Caco-2 (cell line): ENCODE measurements at regions of chrX and their contacts with region 1.

Region 1: GRCh38 chrX:69222103-69223090 is 57.1 kb upstream of the PJA1 start:
- DNase-seq: peak; percentile 48 to 70
- H3K4me3 ChIP-seq: no peak overlapping the region
- H3K4me3 Mint-ChIP-seq: no peak overlapping the region
- H3K27ac Mint-ChIP-seq: no peak overlapping the region
- H3K4me1 ChIP-seq: no peaks in the 10 kb centered on the region
- H3K4me1 Mint-ChIP-seq: no peaks in the 10 kb centered on the region
- H3K27me3 ChIP-seq: no peaks in the 10 kb centered on the region
- H3K27me3 Mint-ChIP-seq: peaks cover 2% of the 10 kb centered on the region
- CTCF ChIP-seq: peak; percentile 70 to 78

Region 2: DNA sequence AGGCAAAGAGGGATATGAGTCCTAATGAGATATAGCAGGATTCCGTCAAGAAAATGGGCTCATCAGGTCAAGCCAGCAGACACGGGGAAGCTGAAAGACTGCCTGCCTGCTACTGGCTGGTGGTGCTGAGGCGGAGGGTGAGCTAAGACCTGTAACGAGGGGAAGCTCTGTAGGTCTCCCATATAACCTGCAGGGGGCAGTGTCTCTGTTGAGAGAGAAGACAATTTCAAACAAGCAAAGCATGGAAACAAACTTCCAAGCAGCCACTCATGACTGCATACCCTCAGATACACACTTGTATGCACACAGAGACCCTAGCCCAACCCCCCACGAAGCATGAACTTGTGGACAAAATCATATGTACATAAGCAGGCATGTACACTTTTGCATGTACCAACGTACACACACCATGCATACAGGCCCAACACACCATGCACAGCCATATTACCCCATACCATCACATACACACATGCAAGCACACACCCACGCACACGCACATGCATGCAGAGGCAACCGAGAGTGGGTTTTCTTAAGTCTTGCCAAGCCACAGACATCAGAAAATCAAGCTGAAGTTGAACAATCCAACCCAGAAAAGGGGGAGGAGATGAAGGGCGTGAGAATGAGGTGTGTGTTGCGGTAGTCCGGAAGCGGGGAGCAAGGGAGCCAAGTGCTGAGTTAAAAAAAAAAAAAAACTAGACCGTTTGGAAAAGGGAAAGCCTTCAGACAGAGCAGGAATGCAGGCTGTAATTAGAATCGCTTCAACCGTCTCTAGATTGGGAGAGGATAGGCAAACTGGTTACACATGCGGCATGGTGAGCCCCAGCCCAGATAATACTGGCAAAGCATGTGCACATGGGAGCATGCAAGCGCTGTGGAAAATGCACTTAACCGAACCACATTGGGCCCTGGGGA is 128.2 kb before region 1 on chrX:
- CTCF ChIA-PET with region 1: no interaction called
- POLR2A ChIA-PET with region 1: no interaction called
- intact Hi-C with region 1: loop called (anchors 1 kb)
- DNase-seq: peak; percentile 54 to 56
- H3K4me3 ChIP-seq: no peak overlapping the region
- H3K4me3 Mint-ChIP-seq: no peak overlapping the region
- H3K27ac Mint-ChIP-seq: no peak overlapping the region
- H3K4me1 ChIP-seq: no peaks in the 10 kb centered on the region
- H3K4me1 Mint-ChIP-seq: no peaks in the 10 kb centered on the region
- H3K27me3 ChIP-seq: no peaks in the 10 kb centered on the region
- H3K27me3 Mint-ChIP-seq: no peaks in the 10 kb centered on the region
- CTCF ChIP-seq: peak; percentile 28 to 30

Region 3: GRCh38 chrX:69285881-69286564 is 63.6 kb after region 1 on chrX:
- CTCF ChIA-PET with region 1: no interaction called
- POLR2A ChIA-PET with region 1: no interaction called
- intact Hi-C with region 1: loop called (anchors 5 kb)
- DNase-seq: peak; percentile 37 to 62
- H3K4me3 ChIP-seq: peak overlapping the region; percentile 8; the same call in 1 of the 2 replicates
- H3K4me3 Mint-ChIP-seq: peak overlapping the region; percentile 51
- H3K27ac Mint-ChIP-seq: no peak overlapping the region
- H3K4me1 ChIP-seq: no peaks in the 10 kb centered on the region
- H3K4me1 Mint-ChIP-seq: no peaks in the 10 kb centered on the region
- H3K27me3 ChIP-seq: no peaks in the 10 kb centered on the region
- H3K27me3 Mint-ChIP-seq: no peaks in the 10 kb centered on the region
- CTCF ChIP-seq: peak; percentile 67 to 68

Region 4: GRCh38 chrX:69387567-69388487 is 165.4 kb after region 1 on chrX:
- CTCF ChIA-PET with region 1: no interaction called
- POLR2A ChIA-PET with region 1: no interaction called
- intact Hi-C with region 1: loop called (anchors 1 kb)
- DNase-seq: peak; percentile 56 to 66
- H3K4me3 ChIP-seq: no peak overlapping the region
- H3K4me3 Mint-ChIP-seq: no peak overlapping the region
- H3K27ac Mint-ChIP-seq: no peak overlapping the region
- H3K4me1 ChIP-seq: no peaks in the 10 kb centered on the region
- H3K4me1 Mint-ChIP-seq: no peaks in the 10 kb centered on the region
- H3K27me3 ChIP-seq: no peaks in the 10 kb centered on the region
- H3K27me3 Mint-ChIP-seq: peaks cover 6% of the 10 kb centered on the region
- CTCF ChIP-seq: peak; percentile 63 to 68